ENCODE measurements at regions of chr5 and their contacts with region 1.

Region 1: DNA sequence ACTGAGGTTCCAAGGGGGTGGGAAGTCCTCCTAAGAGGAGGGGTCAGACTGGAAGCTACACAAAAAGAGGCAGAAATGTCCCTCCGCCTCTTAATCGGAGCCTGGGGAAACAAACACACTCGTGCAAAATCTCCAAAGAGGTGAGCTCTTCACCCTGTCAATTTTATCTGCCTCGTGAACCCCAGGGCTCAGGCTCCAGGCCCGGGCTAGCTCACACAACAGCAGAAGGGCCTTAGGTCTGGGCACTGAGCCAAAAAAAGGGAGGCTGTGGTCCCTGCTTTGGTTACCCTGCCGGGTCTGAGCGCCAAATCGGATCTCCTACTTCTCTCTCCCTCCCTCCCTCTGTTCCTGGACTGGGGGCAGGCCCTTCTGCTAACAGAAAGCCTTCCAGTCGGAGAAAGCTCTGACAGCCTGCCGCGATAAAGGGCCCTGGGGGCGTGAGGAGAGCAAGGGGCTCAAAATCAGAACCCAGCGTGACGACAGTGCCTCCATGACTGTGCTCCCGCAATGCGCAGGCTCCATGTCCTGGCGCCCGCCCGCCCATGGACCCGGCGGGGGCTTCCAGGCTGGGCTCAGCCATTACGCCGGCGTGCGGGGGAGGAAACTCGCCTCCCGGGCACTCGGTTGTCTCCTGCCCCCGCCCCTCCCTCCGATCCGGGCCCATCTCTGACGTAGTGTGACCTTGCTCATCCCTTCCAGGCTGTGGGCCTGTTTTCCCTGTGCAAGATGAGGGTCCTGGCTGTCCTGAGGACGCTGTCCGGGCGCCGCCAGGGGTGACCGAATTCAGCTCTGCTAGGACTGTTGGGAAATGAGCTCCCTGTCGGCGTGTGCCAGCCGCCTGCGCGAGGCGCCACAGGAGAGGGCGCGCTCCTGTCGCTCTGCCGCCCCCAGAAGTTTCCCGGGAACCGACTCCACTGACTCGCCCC is 865 bp upstream of the SLC22A4 start:
- DNase-seq: peak; percentile 73
- H3K4me3 Mint-ChIP-seq: peak overlapping the region; percentile 88
- H3K27ac Mint-ChIP-seq: peak overlapping the region; percentile 90
- H3K4me1 Mint-ChIP-seq: peaks cover 26% of the 10 kb centered on the region
- H3K27me3 Mint-ChIP-seq: no peaks in the 10 kb centered on the region
- CTCF ChIP-seq: peak; percentile 29

Region 2: GRCh38 chr5:132334812-132335211 is 41.5 kb after region 1 on chr5:
- CTCF ChIA-PET with region 1: interaction called, 10 read pairs
- intact Hi-C with region 1: no loop called
- DNase-seq: no peak
- H3K4me3 Mint-ChIP-seq: no peak overlapping the region
- H3K27ac Mint-ChIP-seq: peak overlapping the region; percentile 21
- H3K4me1 Mint-ChIP-seq: peaks cover 22% of the 10 kb centered on the region
- H3K27me3 Mint-ChIP-seq: no peaks in the 10 kb centered on the region
- CTCF ChIP-seq: no peak

Region 3: DNA sequence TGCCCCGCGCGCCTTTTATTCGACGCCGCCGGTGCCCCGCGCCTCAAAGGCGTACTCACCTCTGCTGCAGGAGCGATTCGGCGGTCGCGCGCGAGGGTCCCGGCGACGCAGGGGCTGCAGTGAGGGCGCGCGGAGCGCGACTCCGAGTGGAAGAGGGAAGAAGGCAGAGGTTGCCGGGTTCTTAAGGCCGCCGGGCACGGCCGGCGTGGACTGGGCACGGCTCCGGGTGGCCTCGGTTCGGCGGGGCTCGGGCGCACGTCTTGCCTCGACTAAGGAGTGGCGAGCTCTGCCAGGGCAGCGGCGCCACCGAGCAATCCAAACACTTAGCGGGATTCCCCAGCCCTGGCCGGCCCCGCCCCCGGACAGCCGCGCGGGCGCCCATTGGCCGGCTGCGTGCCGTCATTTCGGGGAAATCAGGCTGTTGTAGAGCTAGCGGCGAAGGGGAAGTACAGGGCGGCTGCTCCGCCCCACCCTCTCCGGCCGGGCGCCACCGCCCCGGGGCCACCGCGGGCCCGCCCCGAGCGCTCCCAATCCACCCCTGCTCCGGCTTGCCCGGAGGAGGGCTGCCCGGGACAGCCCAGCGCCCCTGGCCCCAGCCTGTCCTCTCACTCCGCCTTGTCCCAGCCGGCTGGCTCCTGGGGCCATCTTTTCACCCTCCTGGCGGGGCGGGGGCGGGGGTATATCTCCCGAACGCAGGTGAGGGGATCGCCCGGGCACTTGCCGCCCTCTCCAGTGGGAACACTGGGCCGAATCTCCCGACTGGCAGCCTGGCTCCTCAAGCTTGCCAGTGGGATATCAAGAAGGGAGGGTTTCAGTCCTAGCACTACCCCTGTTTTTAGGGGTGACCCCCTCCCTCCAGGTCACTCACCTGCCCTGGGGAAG is 197.4 kb after region 1 on chr5 and contains the start of gene IRF1:
- CTCF ChIA-PET with region 1: no interaction called
- intact Hi-C with region 1: loop called (anchors 10 kb)
- DNase-seq: peak; percentile 99
- H3K4me3 Mint-ChIP-seq: peak within 1 kb of the TSS; percentile 89
- H3K27ac Mint-ChIP-seq: peak within 1 kb of the TSS; percentile 76
- H3K4me1 Mint-ChIP-seq: peaks cover 46% of the 10 kb centered on the region
- H3K27me3 Mint-ChIP-seq: no peaks in the 10 kb centered on the region
- CTCF ChIP-seq: no peak
- total RNA-seq, gene IRF1: 64.0 and 82.4 TPM in 2 replicates